ENCODE measurements at regions of chr21 and their contacts with region 1.

Region 1: DNA sequence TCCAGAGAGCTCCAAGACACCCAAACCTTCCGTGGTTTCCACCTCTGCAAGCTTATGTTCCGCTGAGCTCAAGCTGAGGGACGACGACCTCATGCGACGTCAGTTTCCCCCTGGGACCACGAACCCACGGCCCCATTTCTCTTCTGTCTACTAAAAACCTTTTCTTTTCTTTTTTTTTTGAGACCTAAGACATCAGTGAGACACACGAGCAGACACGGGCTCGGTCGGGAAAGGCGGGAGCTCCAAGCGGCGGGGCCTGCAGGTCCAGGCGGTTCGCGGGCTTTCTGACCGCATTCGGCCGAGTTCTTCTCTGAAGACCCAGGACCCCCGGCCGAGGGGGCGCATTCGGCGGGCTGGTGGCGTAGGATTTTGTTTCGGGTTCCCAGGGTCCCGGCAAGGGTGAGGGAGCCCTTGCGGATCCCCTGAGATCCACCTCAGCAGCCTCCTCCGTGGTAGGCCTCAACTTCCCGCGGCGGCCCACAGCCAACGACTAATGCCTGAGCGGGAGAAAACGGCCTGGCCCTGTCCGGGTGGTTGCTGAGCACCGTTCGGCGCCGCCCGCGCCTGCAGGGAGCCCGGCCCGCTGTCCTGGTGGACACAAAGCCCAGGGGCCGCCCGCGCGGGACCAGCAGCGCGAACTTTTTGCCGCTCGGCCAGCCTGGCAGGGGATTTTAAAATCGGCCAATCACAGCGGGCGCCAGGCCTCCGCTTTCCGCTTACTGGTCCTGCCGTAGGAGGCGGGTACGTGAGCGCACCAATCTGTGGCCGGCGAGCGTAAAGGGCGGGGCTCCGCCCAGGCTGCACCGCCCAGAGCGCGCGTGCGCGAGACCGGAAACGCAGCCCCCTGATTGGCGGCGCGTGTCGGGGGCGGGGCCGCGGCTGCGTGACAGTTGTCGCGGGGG is at the start of gene C21orf58:
- DNase-seq: peak; percentile 97
- H3K4me3 Mint-ChIP-seq: peak within 1 kb of the TSS; percentile 96
- H3K27ac Mint-ChIP-seq: peak within 1 kb of the TSS; percentile 97
- H3K4me1 Mint-ChIP-seq: peaks cover 28% of the 10 kb centered on the region
- H3K27me3 Mint-ChIP-seq: no peaks in the 10 kb centered on the region
- total RNA-seq, gene C21orf58: 23.9 to 24.2 TPM

Region 2: DNA sequence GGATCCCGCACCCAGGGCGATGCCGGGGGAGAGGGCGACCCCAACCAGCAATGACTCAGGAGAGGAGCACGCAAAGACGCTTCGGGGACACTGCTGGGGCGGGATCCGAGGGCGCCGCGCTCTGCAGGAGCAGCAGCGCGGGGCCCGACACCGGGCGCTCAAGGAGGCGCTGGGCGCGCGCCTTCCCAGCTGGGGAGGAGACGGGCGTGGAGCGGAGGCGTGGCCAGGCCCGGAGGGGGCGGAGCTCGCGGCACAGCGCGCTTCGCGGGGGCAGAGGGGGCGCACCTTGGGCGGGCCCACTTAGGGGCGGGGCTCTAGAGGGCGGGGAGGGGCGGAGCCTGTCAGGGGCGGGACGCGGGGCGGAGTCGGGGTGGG is 1506.0 kb before region 1 on chr21:
- CTCF ChIA-PET with region 1: no interaction called
- intact Hi-C with region 1: loop called (anchors 5 kb)
- DNase-seq: peak; percentile 95
- H3K4me3 Mint-ChIP-seq: peak overlapping the region; percentile 65
- H3K27ac Mint-ChIP-seq: no peak overlapping the region
- H3K4me1 Mint-ChIP-seq: peaks cover 15% of the 10 kb centered on the region
- H3K27me3 Mint-ChIP-seq: no peaks in the 10 kb centered on the region

Region 3: DNA sequence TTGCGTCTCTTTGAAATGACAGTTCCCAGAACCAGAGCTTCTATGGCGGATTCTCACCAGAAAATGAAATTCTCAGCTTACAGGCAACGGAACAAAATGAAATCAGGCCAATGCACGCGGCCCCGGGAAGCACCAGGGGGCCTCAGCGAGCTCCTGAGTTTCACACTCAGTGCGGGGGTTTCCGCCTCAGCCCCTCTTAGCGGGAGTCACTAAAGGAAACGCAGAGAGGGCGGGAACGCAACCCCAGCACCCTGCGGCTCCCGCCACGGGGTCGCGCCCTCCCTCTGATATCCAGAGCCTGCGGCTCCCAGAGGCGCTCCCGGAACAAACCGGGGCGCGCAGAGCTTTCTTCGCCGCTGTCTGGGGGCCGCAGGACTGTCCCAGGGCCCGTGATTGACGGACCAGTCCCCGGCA is 349.8 kb before region 1 on chr21:
- CTCF ChIA-PET with region 1: interaction called, 3 read pairs
- intact Hi-C with region 1: loop called (anchors 2 kb)
- DNase-seq: peak; percentile 93
- H3K4me3 Mint-ChIP-seq: peak overlapping the region; percentile 70
- H3K27ac Mint-ChIP-seq: peak overlapping the region; percentile 66
- H3K4me1 Mint-ChIP-seq: peaks cover 20% of the 10 kb centered on the region
- H3K27me3 Mint-ChIP-seq: peaks cover 16% of the 10 kb centered on the region

Region 4: GRCh38 chr21:46228345-46229051 is 95.0 kb before region 1 on chr21 and contains the start of gene LSS:
- CTCF ChIA-PET with region 1: no interaction called
- intact Hi-C with region 1: loop called (anchors 1 kb)
- DNase-seq: peak; percentile 95
- H3K4me3 Mint-ChIP-seq: peak within 1 kb of the TSS; percentile 97
- H3K27ac Mint-ChIP-seq: peak within 1 kb of the TSS; percentile 81
- H3K4me1 Mint-ChIP-seq: peaks cover 34% of the 10 kb centered on the region
- H3K27me3 Mint-ChIP-seq: no peaks in the 10 kb centered on the region
- total RNA-seq, gene LSS: 9.6 to 12.6 TPM

Region 5: GRCh38 chr21:46285761-46286496 is 37.5 kb before region 1 on chr21 and contains the start of gene YBEY:
- CTCF ChIA-PET with region 1: interaction called, 5 read pairs
- intact Hi-C with region 1: loop called (anchors 1 kb)
- DNase-seq: peak; percentile 89
- H3K4me3 Mint-ChIP-seq: peak within 1 kb of the TSS; percentile 98
- H3K27ac Mint-ChIP-seq: peak within 1 kb of the TSS; percentile 96
- H3K4me1 Mint-ChIP-seq: peaks cover 59% of the 10 kb centered on the region
- H3K27me3 Mint-ChIP-seq: no peaks in the 10 kb centered on the region
- total RNA-seq, gene YBEY: 9.9 to 11.0 TPM

Region 6: GRCh38 chr21:46368533-46369285 is 45.2 kb after region 1 on chr21:
- CTCF ChIA-PET with region 1: interaction called, 3 read pairs
- intact Hi-C with region 1: loop called (anchors 2 kb)
- DNase-seq: peak; percentile 75
- H3K4me3 Mint-ChIP-seq: peak overlapping the region; percentile 38
- H3K27ac Mint-ChIP-seq: peak overlapping the region; percentile 65
- H3K4me1 Mint-ChIP-seq: peaks cover 20% of the 10 kb centered on the region
- H3K27me3 Mint-ChIP-seq: no peaks in the 10 kb centered on the region

Region 7: GRCh38 chr21:46392921-46393320 is 69.4 kb after region 1 on chr21:
- CTCF ChIA-PET with region 1: no interaction called
- intact Hi-C with region 1: no loop called
- DNase-seq: no peak
- H3K4me3 Mint-ChIP-seq: no peak overlapping the region
- H3K27ac Mint-ChIP-seq: no peak overlapping the region
- H3K4me1 Mint-ChIP-seq: no peaks in the 10 kb centered on the region
- H3K27me3 Mint-ChIP-seq: no peaks in the 10 kb centered on the region

Region 8: DNA sequence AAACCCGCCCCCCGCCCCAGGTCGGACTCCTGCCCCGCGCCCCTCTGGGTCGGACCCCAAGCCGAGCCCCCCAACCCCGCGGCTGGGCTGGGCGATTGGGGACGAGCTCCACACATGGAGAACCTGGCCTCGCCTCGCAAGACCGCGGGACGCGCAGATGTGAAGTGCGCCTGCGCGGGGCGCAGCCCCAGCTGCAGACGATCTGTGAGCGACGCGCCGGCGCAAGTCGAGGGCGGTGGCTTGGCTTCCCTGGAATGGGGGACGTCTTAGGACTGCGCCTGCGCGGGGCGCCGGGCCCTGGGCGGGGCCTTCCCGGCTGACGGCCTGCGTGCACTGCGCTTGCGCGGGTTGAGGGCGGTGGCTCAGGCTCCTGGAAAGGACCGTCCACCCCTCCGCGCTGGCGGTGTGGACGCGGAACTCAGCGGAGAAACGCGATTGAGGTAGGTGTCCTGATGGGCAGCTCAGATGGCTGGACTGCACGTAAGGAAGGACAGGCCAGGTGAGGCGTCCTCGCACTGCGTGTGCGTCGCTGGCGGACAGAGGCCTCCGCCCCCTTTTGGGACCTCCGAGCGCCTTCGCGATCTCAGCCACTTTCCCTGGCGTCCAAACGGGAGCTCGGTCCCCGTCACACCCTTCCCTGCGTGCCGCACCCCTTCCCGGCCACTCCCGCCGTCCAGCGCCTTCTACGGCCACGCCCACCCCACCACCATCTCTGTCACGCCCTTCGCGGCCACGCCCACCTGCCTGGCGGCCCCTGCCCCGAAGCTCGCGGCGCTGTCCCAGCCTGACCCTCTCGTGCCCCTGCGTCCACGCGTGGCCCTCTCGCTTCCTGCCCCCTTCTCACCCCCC is 312.1 kb after region 1 on chr21 and contains the start of gene PRMT2:
- CTCF ChIA-PET with region 1: no interaction called
- intact Hi-C with region 1: loop called (anchors 1 kb)
- DNase-seq: peak; percentile 97
- H3K4me3 Mint-ChIP-seq: peak within 1 kb of the TSS; percentile 86
- H3K27ac Mint-ChIP-seq: peak within 1 kb of the TSS; percentile 93
- H3K4me1 Mint-ChIP-seq: peaks cover 68% of the 10 kb centered on the region
- H3K27me3 Mint-ChIP-seq: no peaks in the 10 kb centered on the region
- total RNA-seq, gene PRMT2: 78.5 to 81.1 TPM

Measured in activated naive CD4-positive, alpha-beta T cell treated with anti-CD3 and anti-CD28 coated beads for 36 hours (primary cell).